Activated CD4-positive, alpha-beta T cell treated with anti-CD3 and anti-CD28 coated beads, Interleukin-2, amount 10 ng/mL, durations not matched to agents 24 days and 14 days (primary cell): ENCODE measurements at regions of chr5 and their contacts with region 1.

Region 1: DNA sequence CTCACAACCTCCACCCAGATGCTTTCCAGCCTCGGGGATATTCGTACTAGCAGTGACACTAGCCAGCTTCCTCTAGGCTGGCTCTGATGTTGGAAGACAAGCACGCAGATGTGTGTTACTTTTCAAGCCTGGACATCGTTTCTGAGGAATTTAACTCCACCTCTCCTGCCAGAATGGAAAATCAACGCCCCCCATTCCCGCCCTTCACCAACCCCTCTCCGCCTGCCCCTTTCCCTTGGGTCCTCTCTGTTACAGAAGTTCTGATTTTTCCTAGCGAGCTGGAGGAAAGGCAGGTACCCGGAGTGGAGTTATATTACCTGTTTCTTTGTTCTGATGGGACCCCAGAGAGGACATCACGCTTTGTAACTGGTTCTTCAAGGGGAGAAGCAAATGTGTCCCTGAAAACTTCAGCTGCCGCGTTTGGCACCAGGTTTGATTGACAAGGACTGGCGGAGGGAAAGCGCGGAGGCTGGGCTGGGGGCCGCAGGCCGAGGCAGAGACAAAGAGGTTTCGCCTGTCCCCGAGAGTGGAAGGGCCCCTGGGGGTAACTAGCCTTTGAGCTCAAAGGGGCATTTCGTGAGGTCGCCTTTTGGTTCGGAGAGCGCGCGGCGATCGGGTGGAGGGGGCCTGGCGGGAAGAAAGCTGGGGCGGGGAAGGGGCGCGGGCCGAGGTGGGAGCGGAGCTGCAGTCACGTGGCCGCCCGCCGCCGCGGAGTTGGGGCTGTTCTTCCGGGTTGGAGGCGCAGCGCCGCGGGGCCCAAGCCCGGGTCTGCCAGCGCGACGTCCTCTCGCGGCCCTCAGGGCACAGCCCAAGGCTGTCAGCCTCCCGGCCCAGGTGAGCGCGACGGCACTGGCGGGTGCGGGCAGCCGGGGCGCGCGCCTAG is at the start of gene NNT:
- DNase-seq: peak; percentile 94
- H3K4me3 Mint-ChIP-seq: peak within 1 kb of the TSS; percentile 91
- H3K27ac Mint-ChIP-seq: peak within 1 kb of the TSS; percentile 85
- H3K4me1 Mint-ChIP-seq: peaks cover 30% of the 10 kb centered on the region
- H3K27me3 Mint-ChIP-seq: no peaks in the 10 kb centered on the region
- total RNA-seq, gene NNT: 52.2 and 59.1 TPM in 2 replicates

Region 2: GRCh38 chr5:43073597-43074546 is 528.8 kb before region 1 on chr5:
- intact Hi-C with region 1: loop called (anchors 2 kb)
- DNase-seq: peak; percentile 89
- H3K4me3 Mint-ChIP-seq: peak overlapping the region; percentile 7
- H3K27ac Mint-ChIP-seq: peak overlapping the region; percentile 79
- H3K4me1 Mint-ChIP-seq: peaks cover 38% of the 10 kb centered on the region
- H3K27me3 Mint-ChIP-seq: no peaks in the 10 kb centered on the region

Region 3: DNA sequence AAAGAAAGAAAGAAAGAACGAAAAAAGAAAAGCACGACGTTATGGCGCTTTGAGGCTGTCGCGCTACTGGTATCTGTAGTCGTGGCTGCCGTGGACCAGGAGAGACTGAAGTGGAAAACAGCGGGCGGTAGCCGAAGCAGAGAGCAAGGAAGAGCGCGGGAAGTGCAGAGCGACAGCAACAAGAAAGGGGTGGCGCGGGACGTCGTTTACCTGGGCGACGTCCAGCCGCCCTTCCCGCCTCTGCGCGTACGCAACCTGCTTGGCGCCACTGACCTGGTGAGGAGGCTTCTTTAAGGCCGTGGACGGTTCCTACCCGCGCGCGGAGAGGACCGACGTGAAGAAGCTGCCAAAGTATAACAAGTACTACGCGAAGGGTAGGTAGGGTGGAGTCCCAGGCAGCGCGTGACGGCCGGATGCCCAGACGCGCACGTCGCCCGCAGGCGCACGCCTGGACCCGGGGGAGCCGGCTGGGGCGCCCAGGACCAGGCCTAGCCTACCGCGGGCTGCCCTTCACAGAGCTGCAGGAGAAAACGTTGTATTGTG is 205.9 kb before region 1 on chr5:
- intact Hi-C with region 1: loop called (anchors 5 kb)
- DNase-seq: peak; percentile 90
- H3K4me3 Mint-ChIP-seq: peak overlapping the region; percentile 98
- H3K27ac Mint-ChIP-seq: peak overlapping the region; percentile 96
- H3K4me1 Mint-ChIP-seq: peaks cover 13% of the 10 kb centered on the region
- H3K27me3 Mint-ChIP-seq: no peaks in the 10 kb centered on the region

Region 4: GRCh38 chr5:43514816-43515677 is 87.7 kb before region 1 on chr5 and contains the start of gene C5orf34:
- intact Hi-C with region 1: loop called (anchors 1 kb)
- DNase-seq: peak; percentile 98
- H3K4me3 Mint-ChIP-seq: peak within 1 kb of the TSS; percentile 95
- H3K27ac Mint-ChIP-seq: peak within 1 kb of the TSS; percentile 96
- H3K4me1 Mint-ChIP-seq: peaks cover 23% of the 10 kb centered on the region
- H3K27me3 Mint-ChIP-seq: no peaks in the 10 kb centered on the region
- total RNA-seq, gene C5orf34: 6.8 and 8.7 TPM in 2 replicates

Region 5: DNA sequence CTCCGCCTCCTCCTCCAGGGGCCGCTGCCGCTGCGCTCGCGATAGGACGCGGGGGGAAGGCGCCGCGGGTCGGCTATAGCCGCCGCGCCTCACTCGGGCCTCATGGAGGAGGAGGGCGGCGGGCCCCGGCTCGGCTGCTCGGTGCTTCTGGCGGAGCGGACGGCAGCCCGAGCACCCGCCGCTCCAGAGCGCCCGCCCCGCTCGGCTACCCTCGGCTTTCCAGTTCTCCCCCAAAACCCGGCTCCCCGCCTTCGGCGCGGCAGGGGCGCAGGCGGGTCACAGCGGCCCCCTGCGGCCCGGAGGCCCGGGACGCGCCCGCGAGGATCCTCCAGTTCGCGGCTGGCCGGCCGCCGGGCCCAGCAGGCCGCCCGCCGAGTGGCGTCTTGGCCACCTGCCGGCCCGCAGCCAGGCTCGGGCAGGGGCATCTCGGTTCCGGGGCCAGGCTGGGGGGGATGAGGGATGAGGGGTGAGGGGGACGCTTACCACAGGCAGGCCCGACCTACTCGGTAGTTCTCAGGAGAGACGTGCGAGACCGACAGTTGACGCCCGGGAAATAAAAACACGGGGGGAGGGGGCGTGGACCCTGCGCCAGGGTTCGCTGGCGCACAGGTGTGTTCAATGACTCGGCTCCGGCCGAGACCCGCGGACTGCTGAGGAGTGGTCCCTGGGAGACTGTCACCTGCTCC is 45.7 kb before region 1 on chr5 and contains the start of gene PAIP1:
- intact Hi-C with region 1: loop called (anchors 1 kb)
- DNase-seq: peak; percentile 96
- H3K4me3 Mint-ChIP-seq: peak within 1 kb of the TSS; percentile 91
- H3K27ac Mint-ChIP-seq: peak within 1 kb of the TSS; percentile 90
- H3K4me1 Mint-ChIP-seq: peaks cover 12% of the 10 kb centered on the region
- H3K27me3 Mint-ChIP-seq: peaks cover 13% of the 10 kb centered on the region
- total RNA-seq, gene PAIP1: 60.2 and 64.1 TPM in 2 replicates

Region 6: DNA sequence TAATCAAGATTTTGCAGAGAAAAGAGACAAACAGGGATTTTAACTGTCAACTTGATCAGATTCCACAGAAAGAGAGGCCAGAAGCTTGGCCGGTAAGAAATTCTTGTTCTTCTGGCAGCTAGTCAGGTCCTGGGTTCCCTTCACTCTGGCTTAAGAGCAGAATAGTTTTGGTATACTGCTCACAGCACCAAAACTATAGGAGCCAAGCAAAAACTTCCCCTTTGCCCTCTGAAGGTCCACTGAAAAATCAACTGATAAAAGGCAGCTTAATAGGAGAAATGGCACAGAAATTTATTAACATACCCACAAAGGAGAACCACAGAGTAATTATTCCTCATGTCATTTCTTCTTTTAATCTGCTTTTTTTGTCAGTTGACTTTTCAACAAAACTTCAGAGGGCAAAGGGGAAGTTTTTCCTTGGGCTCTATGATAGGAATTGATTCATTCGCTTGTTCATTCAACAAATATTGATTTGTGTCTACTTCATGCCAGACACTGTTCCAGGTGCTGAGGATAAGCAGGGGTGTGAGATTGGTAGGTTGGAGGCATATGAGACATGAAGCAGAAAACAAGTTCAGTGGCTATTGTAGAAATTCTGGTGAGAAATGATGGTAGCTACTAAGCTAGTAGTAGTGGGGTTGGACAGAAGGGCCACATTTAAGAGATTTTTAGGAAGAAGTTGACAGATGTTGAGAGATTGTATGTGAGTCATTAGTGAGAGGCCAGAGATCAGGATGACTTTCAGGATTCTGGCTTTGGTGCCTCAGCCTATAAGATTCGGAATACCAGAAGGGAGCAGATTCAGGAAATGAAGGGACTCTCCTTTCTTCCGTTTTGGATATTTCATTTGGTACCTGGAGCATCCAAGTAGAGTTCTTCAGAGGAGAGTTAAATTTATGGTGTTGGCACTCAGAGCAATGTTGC is 20.4 kb before region 1 on chr5:
- intact Hi-C with region 1: no loop called
- DNase-seq: no peak
- H3K4me3 Mint-ChIP-seq: no peak overlapping the region
- H3K27ac Mint-ChIP-seq: no peak overlapping the region
- H3K4me1 Mint-ChIP-seq: no peaks in the 10 kb centered on the region
- H3K27me3 Mint-ChIP-seq: no peaks in the 10 kb centered on the region